ENCODE measurements at regions of chr6 and their contacts with region 1.

Region 1: GRCh38 chr6:2209226-2209809 is 36.1 kb downstream of the GMDS start:
- DNase-seq: peak; percentile 55
- ATAC-seq: peak; percentile 53
- H3K4me3 ChIP-seq: no peak overlapping the region
- H3K4me3 Mint-ChIP-seq: no peak overlapping the region
- H3K27ac ChIP-seq: no peak overlapping the region
- H3K27ac Mint-ChIP-seq: no peak overlapping the region
- H3K4me1 ChIP-seq: no peaks in the 10 kb centered on the region
- H3K4me1 Mint-ChIP-seq: no peaks in the 10 kb centered on the region
- H3K27me3 ChIP-seq: no peaks in the 10 kb centered on the region
- H3K27me3 Mint-ChIP-seq: no peaks in the 10 kb centered on the region
- CTCF ChIP-seq: peak; percentile 42

Region 2: GRCh38 chr6:2353412-2354137 is 144.3 kb after region 1 on chr6:
- CTCF ChIA-PET with region 1: interaction called, 24 read pairs
- POLR2A ChIA-PET with region 1: no interaction called
- intact Hi-C with region 1: loop called (anchors 1 kb)
- DNase-seq: peak; percentile 63
- ATAC-seq: no peak
- H3K4me3 ChIP-seq: no peak overlapping the region
- H3K4me3 Mint-ChIP-seq: no peak overlapping the region
- H3K27ac ChIP-seq: no peak overlapping the region
- H3K27ac Mint-ChIP-seq: no peak overlapping the region
- H3K4me1 ChIP-seq: no peaks in the 10 kb centered on the region
- H3K4me1 Mint-ChIP-seq: no peaks in the 10 kb centered on the region
- H3K27me3 ChIP-seq: no peaks in the 10 kb centered on the region
- H3K27me3 Mint-ChIP-seq: no peaks in the 10 kb centered on the region
- CTCF ChIP-seq: peak; percentile 87

Region 3: DNA sequence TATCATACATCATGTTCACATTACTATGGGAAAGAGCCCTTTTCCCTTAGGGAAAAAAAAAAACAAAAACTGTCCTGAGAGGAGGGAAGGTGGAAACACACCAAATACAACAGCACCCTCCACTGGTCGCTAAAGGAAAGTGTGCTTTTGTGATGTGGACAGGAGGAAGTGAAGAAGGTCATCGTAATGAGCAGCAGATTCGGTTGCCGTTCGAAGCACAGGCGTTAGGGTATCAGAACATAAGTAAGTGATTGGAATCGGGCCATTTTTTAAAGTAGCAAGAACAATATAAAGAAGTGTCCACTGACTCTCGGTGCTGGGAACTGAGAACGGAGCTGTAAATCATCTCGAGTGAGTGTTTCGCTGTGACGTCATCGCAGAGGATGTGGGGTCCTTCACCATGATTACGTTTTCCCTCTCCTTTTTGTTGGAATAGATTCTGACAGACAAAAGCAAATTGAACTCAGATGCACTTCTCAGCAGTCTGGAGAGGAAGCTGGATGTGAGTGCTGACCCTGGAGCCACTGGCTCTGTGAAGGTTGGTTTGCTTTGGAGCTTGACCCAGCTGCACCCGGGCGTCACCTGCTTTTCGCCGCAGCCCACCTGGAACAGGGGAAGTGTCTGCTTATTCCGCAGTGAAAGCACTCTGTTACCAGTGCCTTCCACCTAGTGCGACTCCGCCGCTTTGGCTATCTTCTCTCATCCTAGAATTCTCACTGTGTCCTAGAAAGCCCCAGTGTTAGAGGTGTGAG is 239.7 kb after region 1 on chr6:
- CTCF ChIA-PET with region 1: interaction called, 12 read pairs
- POLR2A ChIA-PET with region 1: no interaction called
- intact Hi-C with region 1: no loop called
- DNase-seq: peak; percentile 38
- ATAC-seq: no peak
- H3K4me3 ChIP-seq: peak overlapping the region in 3 of 5 experiments; percentile 4 to 44 (median 33)
- H3K4me3 Mint-ChIP-seq: peak overlapping the region; percentile 62
- H3K27ac ChIP-seq: no peak overlapping the region
- H3K27ac Mint-ChIP-seq: no peak overlapping the region
- H3K4me1 ChIP-seq: no peaks in the 10 kb centered on the region
- H3K4me1 Mint-ChIP-seq: peaks cover 5% of the 10 kb centered on the region
- H3K27me3 ChIP-seq: no peaks in the 10 kb centered on the region
- H3K27me3 Mint-ChIP-seq: peaks cover 15% of the 10 kb centered on the region
- CTCF ChIP-seq: peak; percentile 67

Region 4: GRCh38 chr6:3039384-3039783 is 830.1 kb after region 1 on chr6:
- CTCF ChIA-PET with region 1: no interaction called
- POLR2A ChIA-PET with region 1: no interaction called
- intact Hi-C with region 1: no loop called
- DNase-seq: no peak
- ATAC-seq: no peak
- H3K4me3 ChIP-seq: no peak overlapping the region
- H3K4me3 Mint-ChIP-seq: no peak overlapping the region
- H3K27ac ChIP-seq: no peak overlapping the region
- H3K27ac Mint-ChIP-seq: no peak overlapping the region
- H3K4me1 ChIP-seq: no peaks in the 10 kb centered on the region
- H3K4me1 Mint-ChIP-seq: no peaks in the 10 kb centered on the region
- H3K27me3 ChIP-seq: no peaks in the 10 kb centered on the region
- H3K27me3 Mint-ChIP-seq: peaks cover 9% of the 10 kb centered on the region
- CTCF ChIP-seq: no peak